GM12878 (cell line): ENCODE measurements at regions of chr11 and their contacts with region 1.

Region 1: DNA sequence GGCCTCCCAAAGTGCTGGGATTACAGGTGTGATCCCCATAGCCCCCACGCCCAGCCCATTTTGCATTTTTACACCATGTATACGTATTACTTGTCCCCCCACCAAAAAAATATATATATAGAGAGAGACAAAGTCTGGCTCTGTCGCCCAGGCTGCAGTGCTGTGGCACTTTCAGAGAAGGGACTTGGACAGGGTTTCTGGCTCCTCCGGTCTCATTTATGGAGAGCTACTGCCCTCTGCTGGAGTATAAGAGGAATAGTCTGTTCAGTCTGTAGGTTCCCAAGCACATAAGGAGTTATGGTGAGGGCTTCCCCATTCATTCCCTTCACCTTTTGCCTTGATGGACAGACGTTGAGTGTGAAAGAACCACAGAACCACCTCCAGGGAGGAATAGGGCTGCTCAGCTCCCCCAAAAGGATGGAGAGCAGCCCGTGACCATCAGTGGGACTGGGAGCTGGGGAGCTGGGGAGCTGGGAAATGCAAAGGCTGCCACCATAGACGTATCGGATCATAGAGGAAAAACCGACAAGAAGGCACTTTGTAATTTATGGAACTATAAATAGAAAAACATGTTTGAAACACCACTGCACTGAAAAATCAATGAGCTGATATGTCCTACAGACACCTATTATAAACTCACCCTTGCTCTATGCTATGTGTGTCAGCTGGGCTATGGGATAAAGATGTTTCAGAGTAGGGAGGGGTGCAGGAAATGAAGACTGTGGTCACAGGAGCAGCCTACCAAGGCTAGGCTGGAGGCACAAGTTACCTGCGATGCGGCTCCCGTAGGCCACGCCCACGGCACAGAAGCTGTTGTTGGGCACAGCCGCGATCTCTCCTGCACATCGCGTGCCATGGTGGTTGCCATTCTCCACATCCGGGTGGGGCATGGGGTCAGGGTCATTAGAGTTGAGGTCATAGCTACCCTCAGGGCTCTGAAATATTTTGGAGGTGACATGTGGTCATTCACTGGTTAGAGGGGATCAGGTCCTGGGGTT is 5.2 kb downstream of the PCSK7 start:
- DNase-seq: peak; percentile 35
- ATAC-seq: peak; percentile 79
- H3K4me3 ChIP-seq: no peak overlapping the region
- H3K27ac ChIP-seq: no peak overlapping the region
- H3K4me1 ChIP-seq: peaks cover 9% of the 10 kb centered on the region
- H3K27me3 ChIP-seq: no peaks in the 10 kb centered on the region
- CTCF ChIP-seq: peak; percentile 74 to 90 (median 80); a peak in 5 of 6 replicates
- EP300 ChIP-seq: no peak
- POLR2A ChIP-seq: no peak
- RAD21 ChIP-seq: peak; percentile 90

Region 2: GRCh38 chr11:116732271-116733042 is 494.2 kb before region 1 on chr11:
- CTCF ChIA-PET with region 1: interaction called, 13 read pairs
- POLR2A ChIA-PET with region 1: no interaction called
- RAD21 ChIA-PET with region 1: interaction called, 3 read pairs
- SMC1A ChIA-PET with region 1: interaction called, 4 read pairs
- in situ Hi-C with region 1: no loop called
- intact Hi-C with region 1: no loop called
- DNase-seq: peak; percentile 20
- ATAC-seq: peak; percentile 95
- H3K4me3 ChIP-seq: no peak overlapping the region
- H3K27ac ChIP-seq: no peak overlapping the region
- H3K4me1 ChIP-seq: peaks cover 16% of the 10 kb centered on the region
- H3K27me3 ChIP-seq: no peaks in the 10 kb centered on the region; a peak in 1 of 4 replicates
- CTCF ChIP-seq: peak; percentile 87 to 91 (median 89)
- EP300 ChIP-seq: no peak
- POLR2A ChIP-seq: no peak
- RAD21 ChIP-seq: peak; percentile 55

Region 3: DNA sequence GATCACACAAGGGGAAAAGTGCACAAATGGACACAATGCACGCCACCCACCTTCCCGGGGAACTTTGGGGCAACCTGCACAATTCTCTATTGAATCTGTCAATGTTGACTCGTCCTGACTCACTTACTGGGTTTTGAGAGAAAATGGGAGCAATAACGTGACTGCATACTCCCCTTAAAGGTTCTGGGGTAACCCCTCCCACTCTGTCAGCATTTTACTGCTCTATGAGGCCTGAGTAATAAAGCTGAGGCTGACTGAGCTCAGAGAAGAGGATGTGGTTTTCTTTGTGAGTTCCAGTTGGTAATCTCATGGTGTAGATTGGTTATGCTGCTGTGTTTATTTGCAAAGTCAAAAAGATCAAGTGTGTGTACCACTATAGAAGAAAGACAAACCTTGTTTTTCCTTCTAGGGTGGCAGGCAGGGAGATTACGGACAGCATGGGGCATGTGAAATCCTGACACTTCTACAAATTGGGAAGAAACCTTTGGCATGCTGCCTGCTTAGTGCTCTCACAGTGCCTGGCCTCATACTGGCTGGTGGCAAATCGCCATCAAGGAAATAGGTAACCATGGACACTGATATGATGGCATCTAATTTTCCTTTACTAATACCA is 373.1 kb before region 1 on chr11:
- CTCF ChIA-PET with region 1: interaction called, 12 read pairs
- POLR2A ChIA-PET with region 1: no interaction called
- RAD21 ChIA-PET with region 1: no interaction called
- SMC1A ChIA-PET with region 1: interaction called, 5 read pairs
- in situ Hi-C with region 1: no loop called
- intact Hi-C with region 1: no loop called
- DNase-seq: peak; percentile 90
- ATAC-seq: peak; percentile 98
- H3K4me3 ChIP-seq: peak overlapping the region; percentile 31; the same call in 1 of the 2 replicates
- H3K27ac ChIP-seq: peak overlapping the region; percentile 83
- H3K4me1 ChIP-seq: peaks cover 30% of the 10 kb centered on the region
- H3K27me3 ChIP-seq: no peaks in the 10 kb centered on the region
- CTCF ChIP-seq: no peak
- EP300 ChIP-seq: peak; percentile 79 to 84
- POLR2A ChIP-seq: no peak
- RAD21 ChIP-seq: no peak

Region 4: GRCh38 chr11:117143871-117144476 is 82.7 kb before region 1 on chr11 and contains the start of gene PAFAH1B2:
- CTCF ChIA-PET with region 1: interaction called, 13 read pairs
- POLR2A ChIA-PET with region 1: no interaction called
- RAD21 ChIA-PET with region 1: interaction called, 12 read pairs
- SMC1A ChIA-PET with region 1: interaction called, 6 read pairs
- in situ Hi-C with region 1: no loop called
- intact Hi-C with region 1: no loop called
- DNase-seq: peak; percentile 82
- ATAC-seq: peak; percentile 96
- H3K4me3 ChIP-seq: peak within 1 kb of the TSS; percentile 92
- H3K27ac ChIP-seq: peak within 1 kb of the TSS; percentile 80
- H3K4me1 ChIP-seq: peaks cover 7% of the 10 kb centered on the region
- H3K27me3 ChIP-seq: no peaks in the 10 kb centered on the region
- CTCF ChIP-seq: no peak
- EP300 ChIP-seq: no peak
- POLR2A ChIP-seq: peak; percentile 82
- RAD21 ChIP-seq: no peak
- polyA plus RNA-seq, gene PAFAH1B2: 17.6 to 64.8 TPM

Region 5: GRCh38 chr11:117178210-117179034 is 48.3 kb before region 1 on chr11 and contains the start of gene SIDT2:
- CTCF ChIA-PET with region 1: interaction called, 422 read pairs
- POLR2A ChIA-PET with region 1: interaction called, 51 read pairs
- RAD21 ChIA-PET with region 1: interaction called, 159 read pairs
- SMC1A ChIA-PET with region 1: interaction called, 187 read pairs
- in situ Hi-C with region 1: no loop called
- intact Hi-C with region 1: loop called (anchors 1 kb)
- DNase-seq: peak; percentile 75
- ATAC-seq: peak; percentile 94
- H3K4me3 ChIP-seq: peak within 1 kb of the TSS; percentile 90
- H3K27ac ChIP-seq: peak within 1 kb of the TSS; percentile 73
- H3K4me1 ChIP-seq: peaks cover 15% of the 10 kb centered on the region
- H3K27me3 ChIP-seq: no peaks in the 10 kb centered on the region
- CTCF ChIP-seq: 0 out of 6 replicates have a peak, but pooled peaks of 1 of the 3 experiments have one; percentile 0
- EP300 ChIP-seq: peak in 1 of 2 experiments; percentile 41; a peak in 1 of 4 replicates
- POLR2A ChIP-seq: peak; percentile 79
- RAD21 ChIP-seq: no peak
- polyA plus RNA-seq, gene SIDT2: 4.9 to 5.7 TPM

Region 6: GRCh38 chr11:117210620-117211019 is 16.1 kb before region 1 on chr11:
- CTCF ChIA-PET with region 1: interaction called, 9 read pairs
- POLR2A ChIA-PET with region 1: no interaction called
- RAD21 ChIA-PET with region 1: interaction called, 3 read pairs
- SMC1A ChIA-PET with region 1: interaction called, 15 read pairs
- in situ Hi-C with region 1: no loop called
- intact Hi-C with region 1: no loop called
- DNase-seq: no peak
- ATAC-seq: no peak
- H3K4me3 ChIP-seq: no peak overlapping the region
- H3K27ac ChIP-seq: no peak overlapping the region
- H3K4me1 ChIP-seq: no peaks in the 10 kb centered on the region
- H3K27me3 ChIP-seq: no peaks in the 10 kb centered on the region
- CTCF ChIP-seq: no peak
- EP300 ChIP-seq: no peak
- POLR2A ChIP-seq: no peak
- RAD21 ChIP-seq: no peak

Region 7: GRCh38 chr11:117281159-117281558 is 54.5 kb after region 1 on chr11:
- CTCF ChIA-PET with region 1: no interaction called
- POLR2A ChIA-PET with region 1: no interaction called
- RAD21 ChIA-PET with region 1: no interaction called
- SMC1A ChIA-PET with region 1: no interaction called
- in situ Hi-C with region 1: no loop called
- intact Hi-C with region 1: no loop called
- DNase-seq: no peak
- ATAC-seq: no peak
- H3K4me3 ChIP-seq: no peak overlapping the region
- H3K27ac ChIP-seq: no peak overlapping the region
- H3K4me1 ChIP-seq: no peaks in the 10 kb centered on the region
- H3K27me3 ChIP-seq: no peaks in the 10 kb centered on the region
- CTCF ChIP-seq: no peak
- EP300 ChIP-seq: no peak
- POLR2A ChIP-seq: no peak
- RAD21 ChIP-seq: no peak